BJ (cell line): ENCODE measurements at regions of chr6 and their contacts with region 1.

Region 1: DNA sequence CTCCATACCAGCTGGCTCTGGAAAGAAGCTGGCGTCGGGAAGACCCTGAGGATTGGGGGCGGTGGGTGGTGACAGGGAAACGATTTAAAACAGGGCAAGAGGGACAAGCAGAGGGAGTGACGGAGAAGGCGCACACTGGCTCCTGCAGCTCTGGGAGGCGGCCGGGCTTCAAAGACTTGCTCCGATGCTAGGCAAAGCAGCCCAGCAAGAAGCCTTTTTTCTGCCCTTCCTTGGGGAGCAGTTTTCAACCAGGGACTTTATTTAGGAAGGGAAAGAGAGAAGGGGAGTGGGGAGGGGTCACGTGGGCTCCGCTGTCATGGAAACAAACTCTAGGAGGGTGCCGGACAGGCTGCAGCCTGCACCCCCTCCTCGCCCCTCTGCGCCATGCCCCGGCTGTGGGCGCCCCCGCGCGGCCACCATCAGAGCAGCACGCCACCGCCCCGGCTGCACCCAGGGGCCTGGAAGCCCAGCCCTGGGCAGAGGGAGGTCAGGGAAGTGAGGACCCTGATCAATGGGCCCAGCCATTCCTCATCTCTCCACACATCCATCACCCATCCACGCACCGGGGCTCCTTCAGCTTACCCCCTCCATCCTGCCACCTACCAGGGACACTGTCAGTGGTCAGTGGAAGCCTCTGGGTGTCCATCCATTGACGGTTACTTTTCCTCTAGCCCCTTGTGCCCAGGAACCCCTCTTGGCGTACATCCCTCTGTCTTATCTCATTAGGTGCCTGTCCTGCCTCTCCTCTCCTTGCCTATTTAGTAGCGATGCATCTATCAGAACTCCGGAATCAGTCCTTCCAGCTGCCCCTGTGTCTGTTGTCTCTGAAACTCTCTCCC is 66.6 kb upstream of the CCDC167 start:
- DNase-seq: no peak
- H3K4me3 ChIP-seq: peak overlapping the region; percentile 34
- H3K27me3 ChIP-seq: peaks cover 19% of the 10 kb centered on the region
- CTCF ChIP-seq: peak; percentile 82

Region 2: GRCh38 chr6:36716476-36717093 is 849.7 kb before region 1 on chr6:
- CTCF ChIA-PET with region 1: no interaction called
- POLR2A ChIA-PET with region 1: no interaction called
- DNase-seq: no peak
- H3K4me3 ChIP-seq: no peak overlapping the region
- H3K27me3 ChIP-seq: peaks cover 4% of the 10 kb centered on the region
- CTCF ChIP-seq: no peak

Region 3: GRCh38 chr6:37418722-37419121 is 147.6 kb before region 1 on chr6:
- CTCF ChIA-PET with region 1: no interaction called
- POLR2A ChIA-PET with region 1: no interaction called
- DNase-seq: no peak
- H3K4me3 ChIP-seq: no peak overlapping the region
- H3K27me3 ChIP-seq: no peaks in the 10 kb centered on the region
- CTCF ChIP-seq: no peak

Region 4: DNA sequence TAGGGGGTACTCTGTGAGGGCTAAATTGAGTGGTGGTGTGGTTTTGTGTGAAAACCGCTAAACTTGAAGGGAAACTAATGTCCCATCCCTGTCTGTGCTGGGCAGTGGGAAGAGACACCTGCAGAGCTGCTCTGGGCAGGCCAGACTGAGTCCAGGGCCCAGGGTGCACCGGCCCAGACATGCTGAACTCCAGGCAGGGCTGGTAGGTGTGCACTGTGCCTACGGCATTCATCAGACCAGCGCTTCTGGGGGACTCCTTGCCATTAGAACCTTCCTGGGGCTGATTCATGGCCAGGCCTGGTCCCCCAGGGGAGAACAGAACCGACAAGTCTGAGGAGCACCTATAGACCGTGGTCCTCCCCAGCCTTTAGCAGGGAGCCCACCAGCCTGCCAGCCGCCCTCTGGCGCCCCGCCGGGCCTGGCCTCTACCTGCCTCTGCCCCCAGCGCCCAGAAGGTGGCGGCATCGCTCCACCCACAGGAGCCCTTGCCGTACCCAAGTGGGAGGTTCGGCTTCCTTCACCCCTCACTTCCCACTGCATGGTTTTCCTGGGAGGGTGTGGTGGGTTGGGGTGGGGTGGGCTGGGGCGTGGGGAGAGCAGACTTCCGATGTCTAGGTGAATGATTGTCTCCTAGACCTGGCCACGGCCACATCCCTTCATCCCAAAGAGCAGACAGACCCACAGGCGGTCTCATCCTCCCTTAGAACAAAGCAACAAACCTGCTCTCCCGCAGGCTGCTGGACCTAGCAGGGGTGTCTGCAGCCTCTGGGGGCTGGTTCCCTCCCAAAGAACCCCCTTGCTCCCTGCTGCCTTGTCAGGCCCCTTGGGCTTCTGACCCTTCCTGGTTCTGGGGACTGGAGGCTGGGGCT is 82.2 kb before region 1 on chr6:
- CTCF ChIA-PET with region 1: interaction called, 11 read pairs
- POLR2A ChIA-PET with region 1: no interaction called
- DNase-seq: no peak
- H3K4me3 ChIP-seq: no peak overlapping the region
- H3K27me3 ChIP-seq: no peaks in the 10 kb centered on the region
- CTCF ChIP-seq: peak; percentile 84

Region 5: GRCh38 chr6:37538107-37538506 is 28.2 kb before region 1 on chr6:
- CTCF ChIA-PET with region 1: interaction called, 21 read pairs
- POLR2A ChIA-PET with region 1: no interaction called
- DNase-seq: no peak
- H3K4me3 ChIP-seq: no peak overlapping the region
- H3K27me3 ChIP-seq: peaks cover 43% of the 10 kb centered on the region
- CTCF ChIP-seq: peak; percentile 47

Region 6: DNA sequence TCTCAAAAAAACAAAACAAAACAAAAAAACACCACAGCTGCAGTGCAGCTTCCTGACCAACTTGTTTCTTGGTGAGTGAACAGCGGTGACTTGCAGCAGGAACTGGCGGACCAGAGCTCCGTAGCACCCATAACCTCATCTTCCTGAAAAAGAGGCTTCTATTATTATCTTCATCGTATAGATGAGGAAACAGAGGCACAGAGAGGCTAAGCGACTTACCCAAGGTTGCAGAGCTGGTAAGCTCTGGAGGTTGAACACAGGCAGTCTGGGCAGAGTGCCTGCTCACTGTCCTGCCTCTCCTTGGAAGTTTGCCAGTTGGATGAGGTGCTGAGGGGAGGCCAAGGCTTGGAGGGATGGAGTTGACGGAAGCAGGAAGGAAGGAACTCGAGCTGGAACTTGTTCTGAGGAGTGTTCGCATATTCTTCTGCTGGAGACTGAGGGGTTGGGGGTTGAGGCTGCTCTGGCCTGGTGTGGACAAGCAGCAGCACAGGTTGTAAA is 18.7 kb before region 1 on chr6:
- CTCF ChIA-PET with region 1: interaction called, 13 read pairs
- POLR2A ChIA-PET with region 1: no interaction called
- DNase-seq: no peak
- H3K4me3 ChIP-seq: no peak overlapping the region
- H3K27me3 ChIP-seq: peaks cover 1% of the 10 kb centered on the region
- CTCF ChIP-seq: no peak

Region 7: GRCh38 chr6:37554480-37554819 is 11.9 kb before region 1 on chr6:
- CTCF ChIA-PET with region 1: interaction called, 37 read pairs
- POLR2A ChIA-PET with region 1: no interaction called
- DNase-seq: no peak
- H3K4me3 ChIP-seq: no peak overlapping the region
- H3K27me3 ChIP-seq: no peaks in the 10 kb centered on the region
- CTCF ChIP-seq: no peak

Region 8: GRCh38 chr6:37576336-37576813 is 10.0 kb after region 1 on chr6:
- CTCF ChIA-PET with region 1: interaction called, 31 read pairs
- POLR2A ChIA-PET with region 1: no interaction called
- DNase-seq: peak; percentile 41
- H3K4me3 ChIP-seq: no peak overlapping the region
- H3K27me3 ChIP-seq: no peaks in the 10 kb centered on the region
- CTCF ChIP-seq: no peak